ENCODE measurements at regions of chr18 and their contacts with region 1.

Region 1: DNA sequence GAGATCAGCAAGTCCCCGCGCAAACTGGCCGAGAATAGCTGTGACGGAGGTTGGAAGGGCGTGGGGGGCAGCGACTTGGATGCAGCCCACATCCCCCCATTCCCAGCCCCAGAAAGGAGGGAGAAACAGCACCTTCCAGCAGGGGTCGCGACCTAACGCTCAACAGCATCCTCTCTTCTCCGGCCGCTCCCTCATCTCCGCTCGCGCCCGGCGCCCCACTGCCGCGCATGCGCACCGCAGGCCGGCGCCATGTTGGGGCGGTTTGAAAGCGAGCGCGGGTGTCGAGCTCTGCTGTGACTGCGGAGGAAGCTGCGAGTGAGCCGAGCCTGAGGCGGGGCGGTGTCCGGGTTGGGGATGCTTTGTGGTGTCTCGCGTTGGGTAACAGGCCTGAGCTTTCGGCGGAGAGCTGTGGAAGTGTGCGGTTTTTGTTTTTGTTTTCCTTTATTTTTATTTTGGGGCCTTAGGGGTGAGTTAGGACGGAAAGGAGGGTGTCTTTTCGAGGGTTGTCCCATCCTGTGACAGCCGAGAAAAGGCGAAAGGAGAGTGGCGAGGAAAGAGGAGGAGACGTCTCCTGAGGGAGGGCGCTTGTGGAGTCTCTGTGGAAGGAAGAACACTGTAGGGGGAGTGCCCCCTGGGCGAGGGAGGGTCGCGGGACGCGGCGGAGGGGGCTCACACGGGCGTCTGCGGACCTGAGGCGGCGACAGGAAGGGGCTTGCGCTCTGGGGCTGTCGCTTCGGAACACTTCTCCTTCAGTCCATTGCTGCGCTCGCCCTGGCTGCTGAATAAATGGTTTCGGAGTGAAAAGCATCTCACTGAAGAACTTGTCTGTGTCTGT is at the starts of genes C18orf54 and STARD6:
- DNase-seq: peak; percentile 92
- ATAC-seq: peak; percentile 89
- H3K4me3 Mint-ChIP-seq: peak within 1 kb of the TSS; percentile 100
- H3K27ac Mint-ChIP-seq: peak within 1 kb of the TSS; percentile 99
- H3K4me1 Mint-ChIP-seq: peaks cover 17% of the 10 kb centered on the region
- H3K27me3 Mint-ChIP-seq: no peaks in the 10 kb centered on the region
- CTCF ChIP-seq: peak; percentile 42
- total RNA-seq, gene C18orf54: 32.8 to 38.2 TPM (median 37.3 TPM) in 3 replicates
- total RNA-seq, gene STARD6: 0.23 TPM in 1 of 3 replicates, not detected in the others

Region 2: DNA sequence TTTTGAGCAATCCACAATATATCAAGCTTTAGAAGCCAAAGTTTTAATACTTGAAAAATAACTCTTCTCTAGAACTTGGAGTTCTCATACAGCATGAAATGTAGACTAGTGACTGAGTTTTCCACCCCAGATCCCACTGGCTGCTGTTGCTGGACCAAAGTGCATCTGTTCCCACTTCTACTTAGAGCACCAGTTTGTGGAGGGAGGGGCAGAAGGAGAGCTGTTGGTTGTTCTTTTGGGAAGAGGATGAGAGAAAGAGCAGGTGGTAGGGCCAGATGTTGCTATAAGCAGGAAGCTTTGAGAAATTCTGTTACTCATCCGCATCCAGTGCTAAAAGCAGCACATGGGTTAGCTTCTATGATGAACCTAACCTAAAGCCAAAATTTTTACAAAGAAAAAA is 192.4 kb before region 1 on chr18:
- CTCF ChIA-PET with region 1: no interaction called
- POLR2A ChIA-PET with region 1: no interaction called
- DNase-seq: no peak
- ATAC-seq: no peak
- H3K4me3 Mint-ChIP-seq: no peak overlapping the region
- H3K27ac Mint-ChIP-seq: no peak overlapping the region
- H3K4me1 Mint-ChIP-seq: no peaks in the 10 kb centered on the region
- H3K27me3 Mint-ChIP-seq: no peaks in the 10 kb centered on the region
- CTCF ChIP-seq: no peak

Region 3: GRCh38 chr18:54224379-54225014 is 133.4 kb before region 1 on chr18 and contains the start of gene MBD2:
- CTCF ChIA-PET with region 1: interaction called, 17 read pairs
- POLR2A ChIA-PET with region 1: no interaction called
- DNase-seq: peak; percentile 95
- ATAC-seq: peak; percentile 97
- H3K4me3 Mint-ChIP-seq: peak within 1 kb of the TSS; percentile 90
- H3K27ac Mint-ChIP-seq: peak within 1 kb of the TSS; percentile 91
- H3K4me1 Mint-ChIP-seq: peaks cover 52% of the 10 kb centered on the region
- H3K27me3 Mint-ChIP-seq: no peaks in the 10 kb centered on the region
- CTCF ChIP-seq: no peak
- total RNA-seq, gene MBD2: 32.8 to 42.7 TPM (median 37.4 TPM) in 3 replicates

Region 4: GRCh38 chr18:54269893-54270844 is 87.7 kb before region 1 on chr18:
- CTCF ChIA-PET with region 1: interaction called, 21 read pairs
- POLR2A ChIA-PET with region 1: interaction called, 13 read pairs
- DNase-seq: peak; percentile 57
- ATAC-seq: peak; percentile 88
- H3K4me3 Mint-ChIP-seq: peak overlapping the region; percentile 79
- H3K27ac Mint-ChIP-seq: peak overlapping the region; percentile 98
- H3K4me1 Mint-ChIP-seq: peaks cover 32% of the 10 kb centered on the region
- H3K27me3 Mint-ChIP-seq: no peaks in the 10 kb centered on the region
- CTCF ChIP-seq: peak; percentile 11; the same call in 1 of the 2 replicates

Region 5: GRCh38 chr18:54392543-54393023 is 34.7 kb after region 1 on chr18:
- CTCF ChIA-PET with region 1: interaction called, 15 read pairs
- POLR2A ChIA-PET with region 1: no interaction called
- DNase-seq: no peak
- ATAC-seq: peak; percentile 43
- H3K4me3 Mint-ChIP-seq: no peak overlapping the region
- H3K27ac Mint-ChIP-seq: no peak overlapping the region
- H3K4me1 Mint-ChIP-seq: peaks cover 37% of the 10 kb centered on the region
- H3K27me3 Mint-ChIP-seq: no peaks in the 10 kb centered on the region
- CTCF ChIP-seq: peak; percentile 73

Measured in WTC11 (cell line).